Gastrocnemius medialis (tissue), 4 donors: ENCODE measurements at regions of chr6 and their contacts with region 1.

Region 1: GRCh38 chr6:155530219-155530834 is 74.7 kb upstream of the NOX3 start:
- DNase-seq: peak in 1 of 2 donors; percentile 12
- ATAC-seq: peak; percentile 43 to 49
- H3K4me3 ChIP-seq: peak overlapping the region in 2 of 4 donors; percentile 37 to 38
- H3K27ac ChIP-seq: peak overlapping the region; percentile 70 to 89 (median 81)
- H3K4me1 ChIP-seq: peaks cover 19 to 25% of the 10 kb centered on the region in 2 donors
- H3K27me3 ChIP-seq: no peaks in the 10 kb centered on the region
- CTCF ChIP-seq: peak; percentile 40 to 75 (median 73)
- POLR2A ChIP-seq: no peak

Region 2: DNA sequence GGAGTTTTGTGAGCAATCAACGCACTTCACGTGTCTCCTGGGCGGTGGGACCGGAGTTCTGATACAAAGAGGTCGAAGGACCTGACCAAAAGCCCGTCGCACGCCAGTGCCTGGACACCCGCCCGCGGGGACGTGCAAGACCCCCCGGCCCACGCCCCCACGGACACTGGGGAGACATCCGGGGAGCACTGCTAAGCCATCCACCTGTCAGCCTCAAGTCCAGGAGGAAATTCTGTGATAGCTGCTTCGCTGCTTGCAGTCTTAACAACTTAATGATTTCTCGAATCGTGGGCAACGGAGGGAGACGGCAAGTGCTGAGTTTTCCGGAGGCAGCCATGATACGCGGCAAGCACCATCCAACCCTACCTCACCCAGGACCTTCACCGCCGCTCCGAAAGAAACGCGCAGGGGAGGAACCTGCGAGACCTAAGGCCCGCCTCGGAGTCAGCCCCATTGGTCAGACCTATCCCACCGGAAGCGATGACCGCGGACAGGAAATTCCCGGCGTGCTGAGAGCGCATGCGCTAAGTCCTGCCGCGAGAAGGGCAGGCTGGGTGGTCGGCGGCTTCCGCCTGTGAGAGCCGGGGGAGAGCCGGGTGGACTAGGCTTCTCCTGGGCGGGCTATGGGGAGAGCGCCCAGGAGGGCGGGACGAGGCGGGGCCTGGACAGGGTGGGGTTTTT is 216.1 kb before region 1 on chr6 and contains the start of gene TFB1M:
- in situ Hi-C with region 1: no loop called
- intact Hi-C with region 1: loop called (anchors 1 kb)
- DNase-seq: peak; percentile 98
- ATAC-seq: peak; percentile 90 to 91
- H3K4me3 ChIP-seq: peak within 1 kb of the TSS; percentile 84 to 95 (median 88)
- H3K27ac ChIP-seq: peak within 1 kb of the TSS; percentile 87 to 93 (median 91)
- H3K4me1 ChIP-seq: peaks cover 3 to 11% of the 10 kb centered on the region in 2 donors
- H3K27me3 ChIP-seq: no peaks in the 10 kb centered on the region
- CTCF ChIP-seq: no peak
- POLR2A ChIP-seq: peak; percentile 94
- total RNA-seq, gene TFB1M: 13.4 to 34.4 (median 29.2) TPM

Region 3: GRCh38 chr6:155327326-155328073 is 202.8 kb before region 1 on chr6:
- in situ Hi-C with region 1: loop called (anchors 5 to 10 kb)
- intact Hi-C with region 1: loop called (anchors 1 kb)
- DNase-seq: peak in 1 of 2 donors; percentile 15
- ATAC-seq: peak; percentile 59 to 81
- H3K4me3 ChIP-seq: no peak overlapping the region
- H3K27ac ChIP-seq: no peak overlapping the region
- H3K4me1 ChIP-seq: peaks cover 0 to 3% of the 10 kb centered on the region in 2 donors
- H3K27me3 ChIP-seq: no peaks in the 10 kb centered on the region
- CTCF ChIP-seq: peak; percentile 80 to 86 (median 84)
- POLR2A ChIP-seq: no peak

Region 4: GRCh38 chr6:155510879-155511278 is 19.4 kb before region 1 on chr6:
- in situ Hi-C with region 1: no loop called
- intact Hi-C with region 1: loop called (anchors 2 kb)
- DNase-seq: no peak
- ATAC-seq: no peak
- H3K4me3 ChIP-seq: no peak overlapping the region
- H3K27ac ChIP-seq: peak overlapping the region; percentile 67 to 81 (median 71)
- H3K4me1 ChIP-seq: peaks cover 25 to 34% of the 10 kb centered on the region in 2 donors
- H3K27me3 ChIP-seq: no peaks in the 10 kb centered on the region
- CTCF ChIP-seq: no peak
- POLR2A ChIP-seq: no peak